ENCODE measurements at regions of chr18 and their contacts with region 1.

Region 1: DNA sequence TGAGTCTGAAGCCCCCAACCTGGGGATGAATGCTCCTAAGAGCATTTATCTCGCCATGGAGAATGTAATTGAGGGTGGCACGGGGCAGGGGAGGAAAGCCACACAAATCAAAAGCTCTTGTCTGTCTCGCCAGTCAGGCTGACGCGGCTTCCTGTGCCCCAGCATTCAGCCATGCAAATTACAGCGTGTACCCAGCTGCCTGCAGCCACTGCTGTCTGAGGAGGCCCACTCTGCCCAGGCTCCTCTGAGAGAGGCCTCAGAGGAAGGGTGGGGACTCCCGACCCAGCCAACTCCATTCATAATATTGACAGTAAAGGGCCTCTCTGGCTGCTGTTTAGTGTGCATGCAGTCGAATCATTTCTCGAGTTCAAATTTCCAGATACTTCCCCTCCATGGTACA is 22.0 kb downstream of the SMAD7 start:
- DNase-seq: peak; percentile 84
- H3K4me3 Mint-ChIP-seq: peak overlapping the region; percentile 60
- H3K27ac Mint-ChIP-seq: peak overlapping the region; percentile 84
- H3K4me1 Mint-ChIP-seq: peaks cover 98% of the 10 kb centered on the region
- H3K27me3 Mint-ChIP-seq: no peaks in the 10 kb centered on the region

Region 2: GRCh38 chr18:48951448-48952286 is 22.9 kb after region 1 on chr18:
- CTCF ChIA-PET with region 1: interaction called, 5 read pairs
- POLR2A ChIA-PET with region 1: interaction called, 19 read pairs
- DNase-seq: peak; percentile 83
- H3K4me3 Mint-ChIP-seq: peak overlapping the region; percentile 81
- H3K27ac Mint-ChIP-seq: peak overlapping the region; percentile 76
- H3K4me1 Mint-ChIP-seq: peaks cover 47% of the 10 kb centered on the region
- H3K27me3 Mint-ChIP-seq: no peaks in the 10 kb centered on the region